MCF 10A (cell line): ENCODE measurements at regions of chr14 and their contacts with region 1.

Region 1: DNA sequence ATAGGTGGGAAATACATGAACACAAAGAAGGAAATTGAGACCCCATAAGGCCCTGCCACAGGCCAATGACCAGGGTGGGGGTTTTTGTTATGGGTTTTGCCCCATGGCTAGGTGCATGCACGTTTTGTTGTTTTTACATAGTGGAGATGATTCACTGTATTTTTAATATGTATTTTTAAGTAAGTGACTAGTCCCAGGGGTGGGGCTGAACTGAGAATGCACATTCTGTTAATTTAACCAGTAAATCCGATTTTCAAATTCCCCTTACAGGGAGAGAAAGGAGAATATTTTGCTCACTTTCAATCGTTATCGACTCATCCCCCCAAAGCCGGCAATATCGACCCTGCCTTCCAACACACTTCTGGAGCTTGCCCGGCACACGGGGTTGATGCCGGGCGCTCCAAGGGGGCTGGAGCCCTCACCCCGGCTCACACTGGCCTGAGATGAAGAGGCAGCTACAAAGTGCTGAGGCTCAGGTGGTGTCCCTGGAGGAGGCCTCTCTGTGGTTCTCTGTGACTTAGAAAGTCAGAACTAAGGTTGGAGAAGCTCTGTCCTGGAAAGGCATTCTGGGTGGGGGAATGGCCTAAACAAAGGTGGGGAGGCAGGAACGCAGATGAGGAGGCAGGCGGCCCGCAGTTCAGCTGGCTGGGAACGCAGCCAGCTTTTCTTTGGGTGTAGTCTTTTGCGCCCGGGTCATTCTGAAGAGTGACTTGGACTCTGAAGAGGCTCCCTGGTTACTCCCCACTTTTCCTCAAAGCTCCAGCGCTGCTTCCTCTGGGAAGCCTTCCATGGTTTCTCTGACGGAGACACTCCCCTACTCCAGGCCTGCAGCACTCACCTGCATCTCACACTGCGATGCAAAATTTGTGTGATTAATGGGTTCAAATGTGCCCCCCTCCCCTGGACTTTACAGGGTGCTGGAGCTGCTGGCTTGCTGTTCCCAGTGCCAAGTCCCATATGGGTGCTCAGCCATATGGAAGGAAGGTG is 50.7 kb upstream of the DLK1 start:
- DNase-seq: peak; percentile 32
- H3K4me3 Mint-ChIP-seq: no peak overlapping the region
- H3K27ac Mint-ChIP-seq: no peak overlapping the region
- H3K4me1 Mint-ChIP-seq: peaks cover 12% of the 10 kb centered on the region
- H3K27me3 Mint-ChIP-seq: no peaks in the 10 kb centered on the region
- CTCF ChIP-seq: no peak

Region 2: DNA sequence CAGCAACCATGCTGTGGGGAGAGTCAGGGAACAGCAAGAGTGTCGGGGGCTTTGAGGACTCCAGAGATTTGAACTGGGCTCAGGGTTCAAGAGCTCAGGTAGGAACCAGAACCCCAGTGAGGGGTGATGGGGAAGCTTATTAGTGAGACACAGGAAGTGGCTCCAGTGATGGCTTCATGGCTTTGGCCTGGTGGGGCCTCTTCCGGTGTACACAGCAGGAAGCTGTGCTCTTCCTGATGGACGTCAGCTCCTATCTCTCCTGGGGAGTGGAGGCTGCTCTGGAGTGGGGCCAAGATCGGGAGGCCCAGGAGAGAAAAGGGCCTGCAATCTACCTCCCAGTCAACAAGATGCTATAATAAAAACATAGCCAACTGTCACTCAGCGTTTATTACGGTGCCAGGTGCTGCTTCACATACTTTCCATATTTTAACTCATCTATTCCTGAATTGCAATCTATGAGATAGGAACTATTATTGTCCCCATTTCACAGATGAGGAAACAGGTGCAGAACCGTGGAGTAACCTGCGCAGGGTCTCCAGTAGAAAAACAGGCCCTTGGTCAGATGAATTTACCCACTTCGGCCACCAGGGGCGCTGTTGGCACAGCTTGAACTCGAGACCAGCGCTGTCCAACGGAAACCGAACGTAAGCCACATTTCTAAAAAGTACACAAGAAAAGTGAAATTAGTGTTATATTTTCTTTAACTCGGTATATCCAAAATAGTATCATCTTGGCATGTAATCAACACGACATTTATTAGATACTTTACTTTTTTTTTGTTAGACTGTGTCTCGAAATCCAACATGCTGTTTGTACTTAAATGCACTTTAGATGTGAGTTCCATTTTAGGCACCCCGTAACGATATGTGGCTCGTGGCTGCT is 12.9 kb before region 1 on chr14:
- CTCF ChIA-PET with region 1: interaction called, 10 read pairs
- POLR2A ChIA-PET with region 1: no interaction called
- intact Hi-C with region 1: no loop called
- DNase-seq: peak; percentile 76
- H3K4me3 Mint-ChIP-seq: no peak overlapping the region
- H3K27ac Mint-ChIP-seq: no peak overlapping the region
- H3K4me1 Mint-ChIP-seq: peaks cover 9% of the 10 kb centered on the region
- H3K27me3 Mint-ChIP-seq: no peaks in the 10 kb centered on the region
- CTCF ChIP-seq: peak; percentile 92